ENCODE measurements at regions of chr11 and their contacts with region 1.

Region 1: GRCh38 chr11:35943713-35944655 is at the start of gene LDLRAD3:
- DNase-seq: peak; percentile 9
- H3K4me3 Mint-ChIP-seq: peak within 1 kb of the TSS; percentile 82
- H3K27ac Mint-ChIP-seq: peak within 1 kb of the TSS; percentile 14
- H3K4me1 Mint-ChIP-seq: peaks cover 8% of the 10 kb centered on the region
- H3K27me3 Mint-ChIP-seq: peaks cover 53% of the 10 kb centered on the region
- total RNA-seq, gene LDLRAD3: 0.76 and 1.4 TPM in 2 replicates

Region 2: DNA sequence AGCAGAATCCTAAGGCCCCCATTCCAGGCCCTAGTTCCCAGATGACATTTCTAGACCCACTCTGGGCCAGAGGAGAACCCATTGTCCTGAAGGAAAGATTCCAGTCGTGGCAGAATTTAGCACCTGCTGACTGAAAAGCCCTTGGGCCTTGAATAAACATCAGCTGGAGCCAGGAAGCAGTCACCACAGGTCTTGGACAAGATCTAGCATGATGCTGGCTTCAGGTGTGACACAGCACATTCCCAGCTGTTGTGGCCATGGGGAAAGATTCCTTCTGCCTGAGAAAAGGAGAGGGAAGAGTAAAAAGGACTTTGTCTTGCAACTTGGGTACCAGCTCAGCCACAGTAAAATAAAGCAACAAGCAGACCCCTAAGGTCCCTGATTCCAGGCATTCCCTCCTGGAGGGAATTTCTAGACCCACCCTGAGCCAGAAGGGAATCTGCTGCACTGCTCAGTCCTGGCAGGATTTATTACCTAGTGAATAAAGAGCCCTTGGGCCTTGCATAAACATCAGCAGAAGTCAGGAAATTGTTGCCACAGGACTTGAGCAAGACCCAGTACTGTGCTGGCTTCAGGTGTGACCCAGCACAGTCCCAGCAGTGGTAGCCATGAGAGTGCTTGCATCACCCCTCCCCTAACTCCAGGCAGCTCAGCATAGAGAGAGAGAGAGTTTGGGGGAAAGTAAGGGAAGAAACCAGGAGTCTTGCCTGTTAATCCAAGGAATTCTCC is 376.1 kb before region 1 on chr11:
- intact Hi-C with region 1: no loop called
- DNase-seq: no peak
- H3K4me3 Mint-ChIP-seq: no peak overlapping the region
- H3K27ac Mint-ChIP-seq: no peak overlapping the region
- H3K4me1 Mint-ChIP-seq: no peaks in the 10 kb centered on the region
- H3K27me3 Mint-ChIP-seq: peaks cover 13% of the 10 kb centered on the region

Region 3: DNA sequence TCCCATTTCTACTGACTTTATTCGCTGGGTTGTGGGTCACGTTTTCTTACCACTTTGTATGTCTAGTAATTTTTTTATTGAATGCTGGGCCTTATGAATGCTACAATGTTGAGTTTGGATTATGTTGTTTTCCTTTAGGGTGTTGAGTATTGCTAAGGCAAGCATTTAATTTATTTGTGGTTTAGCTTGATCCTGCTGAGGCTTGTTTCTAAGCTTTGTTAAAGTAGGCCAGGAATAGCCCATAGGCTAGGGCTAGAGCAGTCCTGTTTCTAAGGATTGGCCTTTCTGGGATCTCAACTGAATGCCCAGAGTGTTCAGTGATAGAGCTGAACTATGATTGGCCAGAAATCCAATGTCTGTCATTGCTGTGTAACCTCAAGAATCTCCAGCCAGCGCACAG is 56.2 kb before region 1 on chr11:
- intact Hi-C with region 1: loop called (anchors 10 kb)
- DNase-seq: no peak
- H3K4me3 Mint-ChIP-seq: no peak overlapping the region
- H3K27ac Mint-ChIP-seq: no peak overlapping the region
- H3K4me1 Mint-ChIP-seq: no peaks in the 10 kb centered on the region
- H3K27me3 Mint-ChIP-seq: peaks cover 12% of the 10 kb centered on the region

Measured in activated T-helper 2 cell treated with anti-CD3 and anti-CD28 coated beads, Interferon-gamma antibody, Interleukin-2, Interleukin-4, amounts not matched to agents 10 μg/mL and 5 μg/mL and 100 μg/mL, durations not matched to agents 14 hours and 24 hours and 36 hours (primary cell).